ENCODE measurements at regions of chr16 and their contacts with region 1.

Region 1: DNA sequence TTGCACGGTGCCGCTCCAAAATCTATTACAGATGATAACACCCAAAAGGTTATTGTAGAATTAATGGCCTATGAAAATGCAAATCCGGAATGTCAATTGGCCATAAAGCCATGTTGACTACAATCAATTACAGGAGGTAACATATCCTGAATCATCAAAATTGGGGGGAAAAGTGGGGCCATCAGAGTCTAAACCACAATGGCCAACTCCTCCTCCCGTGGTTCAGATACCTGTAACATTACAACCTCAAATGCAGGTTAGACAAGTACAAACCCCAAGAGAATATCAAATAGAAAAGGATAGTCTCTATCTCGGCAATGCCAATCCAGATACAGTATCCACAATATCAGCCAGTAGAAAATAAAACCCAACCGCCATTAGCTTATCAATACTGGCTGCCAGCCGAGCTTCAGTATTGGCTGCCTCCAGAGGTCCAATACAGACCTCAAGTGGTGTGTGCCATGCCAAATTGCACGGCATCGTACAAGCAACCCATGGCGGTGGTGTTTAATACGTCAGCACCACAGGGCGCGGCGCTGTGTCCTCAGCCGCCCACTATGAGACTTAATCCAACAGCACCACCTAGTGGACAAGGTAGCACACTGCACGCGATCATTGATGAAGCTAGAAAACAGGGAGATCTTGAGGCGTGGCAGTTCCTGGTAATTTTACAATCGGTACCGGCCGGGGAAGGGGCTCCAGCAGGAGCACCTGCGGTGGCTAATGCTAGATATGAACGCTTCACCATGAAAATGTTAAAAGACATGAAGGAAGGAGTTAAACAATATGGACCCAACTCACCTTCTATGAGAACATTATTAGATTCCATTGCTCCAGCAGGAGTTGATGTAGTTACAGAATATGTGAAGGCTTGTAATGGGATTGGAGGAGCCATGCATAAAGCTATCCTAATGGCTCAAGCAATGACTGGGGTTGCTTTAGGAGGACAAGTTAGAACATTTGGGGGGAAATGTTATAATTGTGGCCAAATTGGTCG is 15.2 kb downstream of the FLYWCH1 start:
- DNase-seq: peak; percentile 86
- H3K4me3 ChIP-seq: peak overlapping the region in 1 of 2 experiments; percentile 37; a peak in 1 of 4 replicates
- H3K27ac ChIP-seq: no peak overlapping the region
- H3K4me1 ChIP-seq: peaks cover 0 to 5% of the 10 kb centered on the region in 2 experiments; a peak in 1 of 4 replicates
- H3K27me3 ChIP-seq: no peaks in the 10 kb centered on the region
- CTCF ChIP-seq: peak; percentile 94
- EP300 ChIP-seq: no peak
- RAD21 ChIP-seq: peak; percentile 85

Region 2: GRCh38 chr16:2785636-2786000 is 141.3 kb before region 1 on chr16:
- CTCF ChIA-PET with region 1: no interaction called
- POLR2A ChIA-PET with region 1: no interaction called
- DNase-seq: peak; percentile 70
- H3K4me3 ChIP-seq: no peak overlapping the region
- H3K27ac ChIP-seq: no peak overlapping the region
- H3K4me1 ChIP-seq: no peaks in the 10 kb centered on the region; a peak in 1 of 4 replicates
- H3K27me3 ChIP-seq: no peaks in the 10 kb centered on the region
- CTCF ChIP-seq: no peak
- EP300 ChIP-seq: no peak
- RAD21 ChIP-seq: no peak

Region 3: GRCh38 chr16:2854700-2855309 is 72.1 kb before region 1 on chr16:
- CTCF ChIA-PET with region 1: interaction called, 13 read pairs
- POLR2A ChIA-PET with region 1: no interaction called
- DNase-seq: peak; percentile 46
- H3K4me3 ChIP-seq: no peak overlapping the region
- H3K27ac ChIP-seq: no peak overlapping the region
- H3K4me1 ChIP-seq: peaks cover 0 to 6% of the 10 kb centered on the region in 2 experiments; a peak in 1 of 4 replicates
- H3K27me3 ChIP-seq: no peaks in the 10 kb centered on the region; the same call in none of the 2 replicates
- CTCF ChIP-seq: peak; percentile 58
- EP300 ChIP-seq: no peak
- RAD21 ChIP-seq: no peak

Region 4: GRCh38 chr16:2898831-2899563 is 28.0 kb before region 1 on chr16:
- CTCF ChIA-PET with region 1: interaction called, 11 read pairs
- POLR2A ChIA-PET with region 1: no interaction called
- DNase-seq: no peak
- H3K4me3 ChIP-seq: no peak overlapping the region
- H3K27ac ChIP-seq: no peak overlapping the region
- H3K4me1 ChIP-seq: peaks cover 3% of the 10 kb centered on the region in 2 experiments; a peak in 1 of 4 replicates
- H3K27me3 ChIP-seq: no peaks in the 10 kb centered on the region
- CTCF ChIP-seq: no peak
- EP300 ChIP-seq: no peak
- RAD21 ChIP-seq: no peak

Region 5: DNA sequence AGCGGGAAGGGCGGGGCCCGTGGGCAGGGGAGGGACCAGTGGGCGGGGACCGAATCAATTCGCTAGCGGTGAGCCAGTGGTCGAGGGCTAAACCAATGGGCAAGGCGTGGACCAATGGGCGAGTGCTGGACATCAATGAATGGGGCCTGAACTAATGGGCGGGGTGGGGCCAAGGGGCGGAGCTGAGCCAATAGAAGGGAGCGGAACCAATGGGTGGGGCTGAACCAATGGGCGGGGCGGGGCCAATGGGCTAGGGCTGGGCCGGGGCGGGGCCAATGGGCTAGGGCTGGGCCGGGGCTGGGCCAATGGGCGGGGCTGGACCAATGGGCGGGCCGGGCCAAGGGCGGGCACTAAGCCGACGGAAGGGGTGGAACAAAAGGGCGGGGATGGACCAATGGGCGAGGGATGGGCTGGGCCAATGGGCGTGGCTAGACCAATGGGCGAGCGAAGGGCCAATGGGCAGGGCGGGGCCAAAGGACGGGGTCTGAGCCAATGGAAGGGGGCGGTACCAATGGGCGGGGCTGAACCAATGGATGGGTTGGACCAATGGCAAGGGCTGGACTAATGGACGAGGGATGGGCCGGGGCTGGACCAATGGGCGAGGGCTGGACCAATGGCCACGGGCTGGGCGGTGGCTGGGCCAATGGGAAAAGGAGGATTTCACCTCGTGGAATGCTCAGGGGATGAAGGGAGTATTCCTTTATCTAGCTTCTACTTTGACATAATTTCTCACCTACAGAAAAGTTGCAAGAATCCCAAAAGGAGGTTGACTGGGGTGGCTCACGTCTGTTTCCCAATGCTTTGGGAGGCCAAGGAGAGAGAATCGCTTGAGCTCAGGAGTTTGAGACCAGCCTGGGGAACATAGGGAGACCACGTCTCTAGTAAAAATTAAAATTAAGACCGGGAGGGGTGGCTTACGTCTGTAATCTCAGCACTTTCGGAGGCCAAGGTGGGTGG is 21.2 kb before region 1 on chr16:
- CTCF ChIA-PET with region 1: interaction called, 11 read pairs
- POLR2A ChIA-PET with region 1: no interaction called
- DNase-seq: peak; percentile 95
- H3K4me3 ChIP-seq: peak overlapping the region; percentile 73 to 95; a peak in 3 of 4 replicates
- H3K27ac ChIP-seq: peak overlapping the region in 1 of 2 experiments; percentile 72; a peak in 2 of 4 replicates
- H3K4me1 ChIP-seq: peaks cover 6 to 8% of the 10 kb centered on the region in 2 experiments; a peak in 2 of 4 replicates
- H3K27me3 ChIP-seq: no peaks in the 10 kb centered on the region
- CTCF ChIP-seq: no peak
- EP300 ChIP-seq: no peak
- RAD21 ChIP-seq: no peak

Region 6: GRCh38 chr16:2911580-2912329 is 15.2 kb before region 1 on chr16 and contains the start of gene FLYWCH1:
- CTCF ChIA-PET with region 1: interaction called, 54 read pairs
- POLR2A ChIA-PET with region 1: no interaction called
- DNase-seq: peak; percentile 97
- H3K4me3 ChIP-seq: peak within 1 kb of the TSS; percentile 65 to 96
- H3K27ac ChIP-seq: peak within 1 kb of the TSS; percentile 53 to 65; a peak in 3 of 4 replicates
- H3K4me1 ChIP-seq: peaks cover 7 to 17% of the 10 kb centered on the region in 2 experiments; a peak in 3 of 4 replicates
- H3K27me3 ChIP-seq: no peaks in the 10 kb centered on the region
- CTCF ChIP-seq: no peak
- EP300 ChIP-seq: no peak
- RAD21 ChIP-seq: no peak
- polyA plus RNA-seq, gene FLYWCH1: 22.4 and 30.1 TPM in 2 replicates

Region 7: GRCh38 chr16:2942045-2942444 is 15.1 kb after region 1 on chr16:
- CTCF ChIA-PET with region 1: interaction called, 18 read pairs
- POLR2A ChIA-PET with region 1: no interaction called
- DNase-seq: no peak
- H3K4me3 ChIP-seq: no peak overlapping the region
- H3K27ac ChIP-seq: no peak overlapping the region
- H3K4me1 ChIP-seq: no peaks in the 10 kb centered on the region
- H3K27me3 ChIP-seq: no peaks in the 10 kb centered on the region
- CTCF ChIP-seq: no peak
- EP300 ChIP-seq: no peak
- RAD21 ChIP-seq: no peak

Region 8: GRCh38 chr16:2963065-2963722 is 36.2 kb after region 1 on chr16:
- CTCF ChIA-PET with region 1: interaction called, 14 read pairs
- POLR2A ChIA-PET with region 1: no interaction called
- DNase-seq: no peak
- H3K4me3 ChIP-seq: peak overlapping the region; percentile 50 to 61
- H3K27ac ChIP-seq: no peak overlapping the region
- H3K4me1 ChIP-seq: peaks cover 0 to 14% of the 10 kb centered on the region in 2 experiments; a peak in 1 of 4 replicates
- H3K27me3 ChIP-seq: peaks cover 28% of the 10 kb centered on the region
- CTCF ChIP-seq: no peak
- EP300 ChIP-seq: no peak
- RAD21 ChIP-seq: no peak

Measured in SK-N-SH (cell line).